Activated CD4-positive, alpha-beta memory T cell treated with anti-CD3 and anti-CD28 coated beads for 36 hours (primary cell): ENCODE measurements at regions of chr4 and their contacts with region 1.

Region 1: GRCh38 chr4:139453371-139454110 is 380 bp upstream of the RAB33B start:
- DNase-seq: peak; percentile 98
- H3K4me3 Mint-ChIP-seq: peak overlapping the region; percentile 95
- H3K27ac Mint-ChIP-seq: peak overlapping the region; percentile 97
- H3K4me1 Mint-ChIP-seq: peaks cover 50% of the 10 kb centered on the region
- H3K27me3 Mint-ChIP-seq: no peaks in the 10 kb centered on the region

Region 2: GRCh38 chr4:138242076-138242833 is 1211.3 kb before region 1 on chr4 and contains the start of gene SLC7A11:
- CTCF ChIA-PET with region 1: no interaction called
- POLR2A ChIA-PET with region 1: no interaction called
- intact Hi-C with region 1: loop called (anchors 5 kb)
- DNase-seq: peak; percentile 69
- H3K4me3 Mint-ChIP-seq: peak within 1 kb of the TSS; percentile 84
- H3K27ac Mint-ChIP-seq: peak within 1 kb of the TSS; percentile 70
- H3K4me1 Mint-ChIP-seq: peaks cover 12% of the 10 kb centered on the region
- H3K27me3 Mint-ChIP-seq: no peaks in the 10 kb centered on the region
- total RNA-seq, gene SLC7A11: 3.2 to 3.4 TPM

Region 3: GRCh38 chr4:139083956-139084803 is 369.4 kb before region 1 on chr4:
- CTCF ChIA-PET with region 1: no interaction called
- POLR2A ChIA-PET with region 1: no interaction called
- intact Hi-C with region 1: loop called (anchors 1 kb)
- DNase-seq: peak; percentile 90
- H3K4me3 Mint-ChIP-seq: peak overlapping the region; percentile 98
- H3K27ac Mint-ChIP-seq: peak overlapping the region; percentile 99
- H3K4me1 Mint-ChIP-seq: peaks cover 36% of the 10 kb centered on the region
- H3K27me3 Mint-ChIP-seq: no peaks in the 10 kb centered on the region

Region 4: DNA sequence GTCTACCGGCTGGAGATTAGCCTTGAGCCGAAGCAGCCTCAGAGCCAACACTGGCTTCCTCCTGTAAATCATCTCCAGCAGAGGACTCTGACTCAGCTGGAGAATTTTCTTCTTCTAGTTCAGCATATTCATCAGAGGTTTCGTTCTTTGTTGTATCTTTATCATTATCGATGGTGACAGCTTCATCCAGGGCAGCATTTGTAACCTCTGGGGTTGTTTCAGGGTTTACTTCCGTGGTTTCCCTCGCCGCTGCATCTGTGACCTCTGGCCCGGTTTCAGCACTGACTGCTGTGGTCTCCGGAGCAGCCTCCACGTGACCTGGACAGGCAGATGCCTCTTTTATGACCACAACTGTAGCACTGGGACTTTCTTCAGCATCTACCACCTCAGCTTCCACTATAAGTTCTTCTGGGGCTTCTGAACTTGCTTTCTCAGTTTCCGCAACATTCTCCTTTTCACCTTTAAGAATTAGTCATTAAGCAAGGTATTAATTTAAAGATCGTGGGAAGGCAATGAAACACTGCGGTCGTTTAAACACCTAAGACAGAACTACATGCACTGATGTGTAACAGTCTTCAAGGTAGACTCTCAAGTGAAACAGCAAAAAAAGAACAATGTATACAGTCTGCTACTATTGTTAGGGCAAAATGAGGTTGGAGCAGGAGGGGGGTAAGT is 186.8 kb before region 1 on chr4:
- CTCF ChIA-PET with region 1: no interaction called
- POLR2A ChIA-PET with region 1: no interaction called
- intact Hi-C with region 1: loop called (anchors 1 kb)
- DNase-seq: peak; percentile 94
- H3K4me3 Mint-ChIP-seq: peak overlapping the region; percentile 28
- H3K27ac Mint-ChIP-seq: peak overlapping the region; percentile 84
- H3K4me1 Mint-ChIP-seq: peaks cover 19% of the 10 kb centered on the region
- H3K27me3 Mint-ChIP-seq: peaks cover 1% of the 10 kb centered on the region

Region 5: DNA sequence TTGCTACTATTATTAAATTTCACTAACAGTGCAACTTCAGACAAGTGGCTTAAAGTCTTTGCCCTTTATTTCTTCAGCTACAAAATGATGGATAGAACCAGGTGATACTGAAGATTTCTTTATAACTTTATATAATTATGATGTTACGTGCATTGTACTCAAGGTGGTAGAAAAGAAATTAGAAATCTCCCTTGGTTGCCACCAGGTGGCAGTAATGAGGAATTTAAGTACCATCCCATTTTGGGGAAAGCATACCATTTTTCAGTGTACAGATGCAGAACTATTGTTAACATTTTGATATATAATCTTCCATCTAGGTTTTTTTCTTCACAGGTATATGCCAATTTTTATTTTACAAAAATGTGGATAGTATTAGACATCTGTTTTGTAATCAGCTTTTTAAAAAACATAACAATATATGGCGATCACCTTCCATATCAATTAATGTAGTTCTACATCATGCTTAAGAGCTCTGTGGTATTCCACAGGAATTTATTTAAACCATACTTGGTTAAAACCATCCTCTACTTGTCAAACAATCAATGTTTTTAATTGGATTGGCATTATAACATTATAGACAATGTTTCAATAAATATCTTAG is 37.4 kb before region 1 on chr4:
- CTCF ChIA-PET with region 1: interaction called, 6 read pairs
- POLR2A ChIA-PET with region 1: no interaction called
- intact Hi-C with region 1: loop called (anchors 1 kb)
- DNase-seq: no peak
- H3K4me3 Mint-ChIP-seq: no peak overlapping the region
- H3K27ac Mint-ChIP-seq: no peak overlapping the region
- H3K4me1 Mint-ChIP-seq: peaks cover 8% of the 10 kb centered on the region
- H3K27me3 Mint-ChIP-seq: no peaks in the 10 kb centered on the region

Region 6: GRCh38 chr4:139488442-139488841 is 34.9 kb after region 1 on chr4:
- CTCF ChIA-PET with region 1: no interaction called
- POLR2A ChIA-PET with region 1: no interaction called
- intact Hi-C with region 1: no loop called
- DNase-seq: no peak
- H3K4me3 Mint-ChIP-seq: no peak overlapping the region
- H3K27ac Mint-ChIP-seq: no peak overlapping the region
- H3K4me1 Mint-ChIP-seq: no peaks in the 10 kb centered on the region
- H3K27me3 Mint-ChIP-seq: no peaks in the 10 kb centered on the region

Region 7: DNA sequence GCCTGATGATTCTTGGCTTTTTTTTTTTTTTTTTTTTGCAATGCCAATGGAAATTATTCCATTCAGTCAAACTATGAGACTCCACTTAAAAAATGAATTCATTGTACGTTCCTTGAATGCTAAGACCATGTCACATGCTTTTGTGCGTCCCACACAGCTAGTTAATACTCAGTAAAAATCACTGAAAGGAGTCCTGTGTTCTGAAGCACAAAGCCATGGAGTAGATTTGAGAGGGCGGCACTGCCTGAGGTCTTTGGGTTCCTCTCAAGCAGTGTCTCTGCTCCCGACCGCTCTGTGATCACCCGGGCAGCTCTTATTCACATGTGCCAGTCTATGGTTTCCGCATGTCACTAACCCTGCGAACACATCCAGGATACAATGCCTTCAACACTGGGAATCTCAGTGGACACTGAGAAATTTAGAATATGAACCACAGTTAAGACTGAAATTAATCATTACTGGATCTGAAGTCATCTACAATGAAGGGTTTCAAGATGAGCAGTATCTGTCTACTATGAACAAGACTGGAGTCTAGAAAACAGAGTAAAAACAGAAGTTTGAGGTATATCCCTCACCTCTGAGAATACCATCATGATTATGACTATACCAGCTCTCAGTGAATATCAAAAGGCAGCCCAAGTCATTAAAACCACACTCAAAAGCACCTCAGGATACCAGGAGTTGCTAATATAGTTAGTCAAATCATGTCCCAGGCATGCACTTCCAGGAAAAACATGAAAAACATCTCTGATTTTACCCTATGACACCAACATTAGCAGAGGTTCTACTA is 405.1 kb after region 1 on chr4:
- CTCF ChIA-PET with region 1: no interaction called
- POLR2A ChIA-PET with region 1: no interaction called
- intact Hi-C with region 1: loop called (anchors 10 kb)
- DNase-seq: peak; percentile 39
- H3K4me3 Mint-ChIP-seq: no peak overlapping the region
- H3K27ac Mint-ChIP-seq: peak overlapping the region; percentile 38
- H3K4me1 Mint-ChIP-seq: peaks cover 26% of the 10 kb centered on the region
- H3K27me3 Mint-ChIP-seq: peaks cover 23% of the 10 kb centered on the region

Region 8: GRCh38 chr4:140373328-140374129 is 920.0 kb after region 1 on chr4 and contains the start of gene SCOC:
- CTCF ChIA-PET with region 1: no interaction called
- POLR2A ChIA-PET with region 1: no interaction called
- intact Hi-C with region 1: loop called (anchors 2 kb)
- DNase-seq: peak; percentile 99
- H3K4me3 Mint-ChIP-seq: no peak within 1 kb of the TSS
- H3K27ac Mint-ChIP-seq: no peak within 1 kb of the TSS
- H3K4me1 Mint-ChIP-seq: peaks cover 32% of the 10 kb centered on the region
- H3K27me3 Mint-ChIP-seq: no peaks in the 10 kb centered on the region
- total RNA-seq, gene SCOC: 46.9 to 48.4 TPM